ENCODE measurements at regions of chr12 and their contacts with region 1.

Region 1: DNA sequence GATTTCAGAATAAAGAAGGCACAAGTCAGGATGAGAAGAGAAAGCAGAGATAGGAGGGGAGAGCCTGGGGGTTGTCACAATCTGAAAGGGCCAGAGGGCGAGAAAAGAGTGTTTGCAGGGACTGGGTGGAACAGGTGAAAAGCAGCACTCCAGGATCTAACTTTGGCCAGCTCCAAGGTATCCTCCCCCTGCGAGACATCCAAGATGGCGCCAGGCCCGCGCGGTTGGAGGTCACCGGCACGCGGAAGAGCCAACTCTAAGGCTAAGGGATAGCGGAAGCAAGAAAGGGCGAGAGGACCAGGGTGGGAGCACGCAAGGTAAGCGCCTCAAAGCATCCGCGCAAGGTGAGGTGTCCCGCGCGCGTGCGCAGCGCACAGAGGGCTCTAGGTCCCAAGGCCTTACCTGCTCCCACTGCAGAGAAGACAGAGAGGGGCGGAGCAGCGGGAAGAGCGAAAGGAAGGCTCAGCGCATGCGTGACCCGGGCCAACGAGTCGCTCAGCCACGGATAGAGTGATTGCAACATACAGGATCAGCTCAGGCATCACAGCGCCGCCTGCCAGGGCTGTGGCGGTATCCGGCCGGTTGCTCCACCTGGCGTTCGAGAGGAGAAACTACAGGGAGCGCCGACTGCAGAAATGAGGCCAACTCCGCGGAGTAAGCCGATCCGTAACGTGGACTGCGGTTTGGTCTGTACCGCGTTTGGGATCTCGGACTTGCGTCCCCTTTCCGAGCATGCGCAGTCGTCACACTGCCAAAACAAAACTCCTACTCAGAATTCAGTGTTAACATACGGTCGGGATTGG is at the start of gene ATP5MC2:
- DNase-seq: peak; percentile 98
- H3K4me3 ChIP-seq: peak within 1 kb of the TSS; percentile 70 to 75
- H3K27ac ChIP-seq: peak within 1 kb of the TSS; percentile 44 to 91
- H3K4me1 ChIP-seq: peaks cover 0 to 8% of the 10 kb centered on the region in 2 experiments; a peak in 2 of 4 replicates
- H3K27me3 ChIP-seq: no peaks in the 10 kb centered on the region
- CTCF ChIP-seq: peak; percentile 98
- EP300 ChIP-seq: no peak
- RAD21 ChIP-seq: peak; percentile 81
- polyA plus RNA-seq, gene ATP5MC2: 309 and 319 TPM in 2 replicates

Region 2: DNA sequence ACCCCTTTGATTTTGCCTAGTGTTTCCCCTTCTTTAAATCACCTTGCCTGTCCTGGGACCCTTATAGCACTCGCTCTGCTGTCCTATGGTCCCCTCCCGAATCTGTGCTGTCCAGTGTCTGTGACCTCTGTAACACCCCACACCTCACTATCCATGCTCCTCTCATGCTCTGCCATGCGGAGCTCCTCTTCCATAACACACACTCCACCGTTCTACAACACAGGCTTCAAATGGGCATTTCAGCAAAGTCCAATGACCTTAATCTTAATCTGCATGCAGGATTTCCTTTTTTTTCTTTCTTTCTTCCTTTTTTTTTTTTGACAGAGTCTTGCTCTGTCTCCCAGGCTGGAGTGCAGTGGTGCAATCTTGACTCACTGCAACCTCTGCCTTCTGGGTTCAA is 546.7 kb before region 1 on chr12:
- CTCF ChIA-PET with region 1: no interaction called
- POLR2A ChIA-PET with region 1: no interaction called
- DNase-seq: no peak
- H3K4me3 ChIP-seq: no peak overlapping the region
- H3K27ac ChIP-seq: no peak overlapping the region
- H3K4me1 ChIP-seq: no peaks in the 10 kb centered on the region; a peak in 1 of 4 replicates
- H3K27me3 ChIP-seq: no peaks in the 10 kb centered on the region
- CTCF ChIP-seq: no peak
- EP300 ChIP-seq: no peak
- RAD21 ChIP-seq: no peak

Region 3: DNA sequence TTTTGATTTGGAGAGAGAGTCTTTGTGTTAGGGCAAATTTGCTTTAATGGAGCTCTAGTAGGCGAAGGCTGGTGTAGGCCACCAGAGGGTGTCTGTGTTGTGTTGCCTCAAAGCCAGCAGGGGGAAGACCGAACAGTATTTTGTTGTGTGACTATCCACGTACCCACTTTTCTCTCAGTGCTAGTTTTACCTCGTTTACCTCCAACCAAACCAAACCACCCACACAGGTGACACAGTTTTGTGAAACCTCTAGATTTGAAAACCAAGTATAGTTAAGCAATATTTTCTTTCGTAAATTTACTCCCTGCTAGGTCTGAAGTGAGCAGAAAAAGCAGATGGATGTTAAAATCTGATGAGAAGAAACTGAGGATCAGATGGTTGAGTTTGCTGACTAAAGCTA is 132.3 kb before region 1 on chr12:
- CTCF ChIA-PET with region 1: interaction called, 120 read pairs
- POLR2A ChIA-PET with region 1: interaction called, 16 read pairs
- DNase-seq: peak; percentile 70
- H3K4me3 ChIP-seq: no peak overlapping the region
- H3K27ac ChIP-seq: peak overlapping the region in 1 of 2 experiments; percentile 19; a peak in 1 of 4 replicates
- H3K4me1 ChIP-seq: 0 out of 4 replicates have a peak, but pooled peaks cover 0 to 4% of the 10 kb centered on the region in 2 experiments
- H3K27me3 ChIP-seq: no peaks in the 10 kb centered on the region
- CTCF ChIP-seq: peak; percentile 86
- EP300 ChIP-seq: no peak
- RAD21 ChIP-seq: peak; percentile 89

Region 4: DNA sequence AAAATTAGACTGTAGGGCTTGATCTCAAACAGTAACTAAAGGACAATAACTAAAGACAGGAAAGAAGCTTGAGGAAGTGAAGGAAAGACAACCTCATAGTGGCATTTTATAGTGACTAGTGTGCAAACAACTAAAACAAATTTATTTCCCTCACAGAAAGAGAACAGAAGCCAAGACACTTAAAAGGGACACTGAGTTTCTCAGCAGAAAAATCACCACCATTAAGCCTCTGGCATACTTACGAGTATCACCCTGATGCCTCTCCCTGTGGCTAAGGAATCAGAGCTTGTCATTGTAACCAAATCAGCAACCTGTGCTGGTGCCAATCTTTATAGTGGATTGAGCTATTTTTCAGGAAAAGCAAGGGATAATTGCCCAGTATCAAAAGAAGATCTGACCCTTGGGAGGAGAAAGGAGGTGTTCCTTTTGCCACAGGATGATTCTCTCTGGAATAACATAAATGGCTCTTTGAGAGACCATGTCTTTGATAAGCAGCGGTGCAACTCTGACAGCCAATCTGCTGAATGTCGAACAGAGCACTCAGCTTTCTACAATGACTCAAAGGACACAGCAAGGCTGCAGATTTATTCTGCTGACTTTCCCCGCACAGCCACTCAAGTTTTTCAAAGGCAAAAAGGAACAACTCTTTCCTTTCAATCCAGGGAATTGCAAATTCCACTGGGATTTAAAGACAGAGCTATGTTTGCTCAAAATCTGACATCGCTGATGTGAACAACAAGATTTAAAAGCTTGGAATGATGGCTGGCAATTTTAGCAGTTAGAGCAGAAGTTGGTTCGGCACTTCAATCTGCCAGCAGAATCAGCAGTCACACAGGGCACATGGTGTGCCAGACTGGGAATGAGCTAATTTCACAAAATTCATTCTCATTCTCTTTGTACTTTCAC is 84.3 kb before region 1 on chr12:
- CTCF ChIA-PET with region 1: interaction called, 16 read pairs
- POLR2A ChIA-PET with region 1: interaction called, 6 read pairs
- DNase-seq: no peak
- H3K4me3 ChIP-seq: peak overlapping the region; percentile 25 to 26; a peak in 3 of 4 replicates
- H3K27ac ChIP-seq: peak overlapping the region; percentile 41 to 82; a peak in 3 of 4 replicates
- H3K4me1 ChIP-seq: peaks cover 17% of the 10 kb centered on the region in 2 experiments
- H3K27me3 ChIP-seq: no peaks in the 10 kb centered on the region
- CTCF ChIP-seq: no peak
- EP300 ChIP-seq: no peak
- RAD21 ChIP-seq: no peak

Region 5: DNA sequence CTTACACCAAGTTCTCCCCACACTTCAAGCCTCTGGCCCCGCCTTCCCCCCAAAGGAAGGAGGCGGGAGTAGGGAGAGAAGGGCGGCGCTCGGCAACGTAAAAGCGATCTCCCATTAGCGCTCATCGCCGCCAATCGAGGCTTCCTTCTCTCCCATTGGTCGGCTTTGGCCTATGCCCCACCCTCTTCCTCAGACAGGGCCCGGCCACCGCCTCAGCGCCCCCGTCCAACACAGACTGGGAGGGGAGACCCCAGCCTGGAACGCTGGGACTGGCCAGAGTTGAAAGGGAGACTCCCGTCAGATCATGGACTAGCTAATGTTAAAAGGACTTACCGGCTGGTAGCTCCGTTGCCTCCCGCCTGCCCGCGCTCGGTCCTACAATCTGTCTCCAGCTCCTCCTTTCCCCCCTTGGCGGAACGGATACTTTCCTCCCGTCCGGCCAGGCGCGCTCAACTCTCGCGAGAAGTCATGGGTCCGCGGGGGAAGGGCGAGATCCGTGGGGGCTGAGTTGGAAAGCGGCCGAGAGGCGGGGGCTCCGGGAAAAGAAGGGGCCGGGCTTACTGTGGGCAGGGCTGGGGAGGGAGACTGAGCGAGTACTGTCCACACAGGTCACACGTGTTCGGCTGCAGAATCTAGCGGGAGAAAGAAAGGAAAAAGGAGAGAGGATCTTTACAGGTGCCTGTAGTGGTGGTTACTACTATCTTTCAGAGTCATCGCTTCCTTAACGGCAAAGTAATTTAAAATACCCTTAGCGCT is 49.7 kb before region 1 on chr12 and contains the start of gene ATF7:
- CTCF ChIA-PET with region 1: interaction called, 10 read pairs
- POLR2A ChIA-PET with region 1: interaction called, 4 read pairs
- DNase-seq: peak; percentile 93
- H3K4me3 ChIP-seq: peak within 1 kb of the TSS; percentile 75 to 77
- H3K27ac ChIP-seq: peak within 1 kb of the TSS; percentile 91 to 96
- H3K4me1 ChIP-seq: peaks cover 5% of the 10 kb centered on the region in 2 experiments; a peak in 3 of 4 replicates
- H3K27me3 ChIP-seq: no peaks in the 10 kb centered on the region
- CTCF ChIP-seq: no peak
- EP300 ChIP-seq: no peak; a peak in 2 of 4 replicates
- RAD21 ChIP-seq: peak; percentile 23; the same call in 1 of the 2 replicates
- polyA plus RNA-seq, gene ATF7: 12.8 and 17.3 TPM in 2 replicates

Region 6: GRCh38 chr12:53696285-53696654 is 20.4 kb after region 1 on chr12:
- CTCF ChIA-PET with region 1: interaction called, 25 read pairs
- POLR2A ChIA-PET with region 1: no interaction called
- DNase-seq: peak; percentile 84
- H3K4me3 ChIP-seq: no peak overlapping the region
- H3K27ac ChIP-seq: no peak overlapping the region
- H3K4me1 ChIP-seq: no peaks in the 10 kb centered on the region
- H3K27me3 ChIP-seq: peaks cover 55% of the 10 kb centered on the region
- CTCF ChIP-seq: no peak
- EP300 ChIP-seq: no peak
- RAD21 ChIP-seq: no peak

Region 7: DNA sequence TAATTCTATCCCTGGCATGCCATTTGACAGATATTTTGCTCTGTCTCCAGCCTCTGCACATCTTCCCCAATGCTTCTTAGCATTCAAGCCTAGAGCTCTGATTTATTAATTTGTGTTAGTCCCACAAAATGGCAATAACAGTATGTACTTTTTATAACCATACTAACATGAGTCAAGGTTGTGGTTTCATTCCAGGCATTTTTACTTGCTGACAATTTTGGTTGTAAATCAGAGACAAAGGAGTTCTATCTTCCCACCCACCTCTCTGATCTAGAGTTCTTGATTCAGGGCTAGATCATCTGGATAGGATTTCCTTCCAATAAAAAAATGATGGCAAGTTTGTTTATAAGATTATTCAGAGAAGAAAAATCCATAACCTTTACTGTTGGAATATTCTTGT is 94.4 kb after region 1 on chr12:
- CTCF ChIA-PET with region 1: no interaction called
- POLR2A ChIA-PET with region 1: no interaction called
- DNase-seq: no peak
- H3K4me3 ChIP-seq: 0 out of 4 replicates have a peak overlapping the region, but pooled peaks of 1 of the 2 experiments have one; percentile 17
- H3K27ac ChIP-seq: peak overlapping the region in 1 of 2 experiments; percentile 38; a peak in 2 of 4 replicates
- H3K4me1 ChIP-seq: peaks cover 0 to 7% of the 10 kb centered on the region in 2 experiments; a peak in 2 of 4 replicates
- H3K27me3 ChIP-seq: peaks cover 24% of the 10 kb centered on the region
- CTCF ChIP-seq: no peak
- EP300 ChIP-seq: peak in 1 of 2 experiments; percentile 66; a peak in 1 of 4 replicates
- RAD21 ChIP-seq: no peak

Region 8: GRCh38 chr12:53844989-53845844 is 169.4 kb after region 1 on chr12:
- CTCF ChIA-PET with region 1: no interaction called
- POLR2A ChIA-PET with region 1: no interaction called
- DNase-seq: no peak
- H3K4me3 ChIP-seq: no peak overlapping the region
- H3K27ac ChIP-seq: no peak overlapping the region
- H3K4me1 ChIP-seq: no peaks in the 10 kb centered on the region
- H3K27me3 ChIP-seq: peaks cover 60% of the 10 kb centered on the region
- CTCF ChIP-seq: no peak
- EP300 ChIP-seq: no peak
- RAD21 ChIP-seq: no peak

Measured in SK-N-SH (cell line).